PC-3 (cell line): ENCODE measurements at regions of chr12 and their contacts with region 1.

Region 1: DNA sequence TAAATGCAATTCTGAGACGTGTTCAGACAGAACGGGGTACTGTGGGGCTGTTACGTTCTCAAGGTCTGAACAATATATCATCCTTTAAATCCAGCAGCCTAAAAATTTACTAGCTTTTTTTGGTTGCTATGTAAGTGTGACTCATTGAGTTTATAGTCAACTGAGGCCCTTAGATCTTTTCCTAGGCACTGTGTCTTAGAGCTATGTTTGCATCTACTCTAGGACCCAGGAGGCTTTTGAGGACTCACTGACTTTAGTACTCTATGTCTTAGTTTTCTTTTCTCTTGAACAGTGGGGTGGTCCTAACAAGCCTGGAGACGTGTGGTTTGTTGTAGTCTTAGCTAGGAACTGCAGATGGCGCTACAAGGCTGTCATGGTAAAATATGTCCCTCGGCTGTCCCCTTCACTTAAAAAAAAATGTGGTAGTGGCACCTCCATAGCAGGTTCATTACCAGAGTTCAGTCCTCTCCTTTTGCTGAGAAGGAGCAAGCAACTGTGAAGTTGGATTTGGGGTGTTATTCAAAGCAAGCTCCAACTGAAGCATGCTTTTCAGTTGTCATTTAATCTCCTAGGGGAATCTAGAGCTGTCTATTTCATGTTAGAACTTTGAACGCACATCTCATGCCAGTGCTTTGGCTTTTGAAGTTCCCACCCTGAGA is 8.7 kb upstream of the SPATS2 start:
- DNase-seq: peak; percentile 63
- ATAC-seq: peak; percentile 89
- H3K4me3 ChIP-seq: 0 out of 2 replicates have a peak overlapping the region, but pooled peaks have one; percentile 2
- H3K27ac ChIP-seq: no peak overlapping the region
- H3K4me1 ChIP-seq: peaks cover 21% of the 10 kb centered on the region
- H3K27me3 ChIP-seq: no peaks in the 10 kb centered on the region
- CTCF ChIP-seq: peak; percentile 92

Region 2: DNA sequence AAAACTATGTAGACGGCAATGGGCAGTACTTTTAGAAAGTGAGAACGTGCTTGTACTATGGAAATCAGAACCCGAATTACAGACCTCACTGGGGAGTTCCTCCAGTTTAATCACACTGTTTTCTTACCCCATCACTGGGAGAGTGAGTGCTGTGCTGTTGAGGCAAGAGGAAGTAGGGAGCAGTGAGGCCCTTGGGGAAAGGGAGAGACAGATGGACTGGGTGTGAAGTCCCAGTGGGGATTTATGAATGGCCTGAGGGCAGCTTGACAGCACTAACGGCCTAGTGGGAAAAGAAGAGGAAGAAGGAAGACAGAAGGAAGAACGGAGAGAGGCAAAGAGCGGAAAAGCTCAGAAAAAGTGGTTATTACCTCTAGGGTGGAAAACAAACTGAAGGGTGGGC is 203.6 kb after region 1 on chr12:
- CTCF ChIA-PET with region 1: no interaction called
- POLR2A ChIA-PET with region 1: interaction called, 15 read pairs
- intact Hi-C with region 1: no loop called
- DNase-seq: no peak
- ATAC-seq: no peak
- H3K4me3 ChIP-seq: no peak overlapping the region
- H3K27ac ChIP-seq: no peak overlapping the region
- H3K4me1 ChIP-seq: peaks cover 9% of the 10 kb centered on the region; the same call in 1 of the 2 replicates
- H3K27me3 ChIP-seq: no peaks in the 10 kb centered on the region
- CTCF ChIP-seq: no peak